K562 (cell line): ENCODE measurements at regions of chr1 and their contacts with region 1.

Region 1: GRCh38 chr1:167491586-167492461 is 26.5 kb downstream of the CD247 start:
- DNase-seq: peak in 2 of 4 experiments; percentile 52 to 62
- ATAC-seq: peak; percentile 85
- H3K4me3 ChIP-seq: no peak overlapping the region
- H3K27ac ChIP-seq: no peak overlapping the region
- H3K4me1 ChIP-seq: peaks cover 0 to 5% of the 10 kb centered on the region in 2 experiments; a peak in 3 of 5 replicates
- H3K27me3 ChIP-seq: peaks cover 30 to 37% of the 10 kb centered on the region in 2 experiments
- CTCF ChIP-seq: peak in 1 of 3 experiments; percentile 27; a peak in 2 of 6 replicates
- EP300 ChIP-seq: no peak
- POLR2A ChIP-seq: no peak
- RAD21 ChIP-seq: no peak

Region 2: DNA sequence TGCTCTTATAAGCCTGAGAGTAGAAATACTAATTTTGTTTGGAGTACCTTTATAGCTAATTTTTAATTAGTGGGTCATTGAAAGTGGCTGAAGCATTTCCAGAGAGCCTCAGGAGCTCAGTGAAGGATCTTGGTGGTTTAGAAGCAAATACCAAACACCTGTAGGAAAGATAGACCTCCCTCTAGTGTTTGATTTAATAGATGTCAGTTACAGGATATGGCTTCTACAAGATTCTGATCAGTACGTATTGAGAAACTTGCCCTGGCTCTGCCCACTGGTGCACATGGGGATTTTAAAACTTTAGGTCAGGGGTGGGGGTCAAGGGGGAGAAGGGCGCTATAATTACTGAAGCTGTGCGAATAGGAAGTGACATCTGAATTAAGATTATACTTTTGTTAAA is 149.0 kb before region 1 on chr1:
- CTCF ChIA-PET with region 1: no interaction called
- POLR2A ChIA-PET with region 1: no interaction called
- in situ Hi-C with region 1: no loop called
- intact Hi-C with region 1: no loop called
- DNase-seq: no peak
- ATAC-seq: peak; percentile 66
- H3K4me3 ChIP-seq: no peak overlapping the region
- H3K27ac ChIP-seq: no peak overlapping the region
- H3K4me1 ChIP-seq: no peaks in the 10 kb centered on the region
- H3K27me3 ChIP-seq: no peaks in the 10 kb centered on the region
- CTCF ChIP-seq: peak in 2 of 3 experiments; percentile 21 to 31; a peak in 2 of 6 replicates
- EP300 ChIP-seq: no peak
- POLR2A ChIP-seq: no peak
- RAD21 ChIP-seq: 0 out of 4 replicates have a peak, but pooled peaks of 1 of the 2 experiments have one; percentile 17

Region 3: GRCh38 chr1:167477986-167478385 is 13.8 kb before region 1 on chr1:
- CTCF ChIA-PET with region 1: no interaction called
- POLR2A ChIA-PET with region 1: interaction called, 3 read pairs
- in situ Hi-C with region 1: no loop called
- intact Hi-C with region 1: loop called (anchors 1 kb)
- DNase-seq: no peak
- ATAC-seq: no peak
- H3K4me3 ChIP-seq: no peak overlapping the region
- H3K27ac ChIP-seq: no peak overlapping the region
- H3K4me1 ChIP-seq: peaks cover 0 to 7% of the 10 kb centered on the region in 2 experiments; a peak in 1 of 5 replicates
- H3K27me3 ChIP-seq: peaks cover 9 to 46% of the 10 kb centered on the region in 2 experiments
- CTCF ChIP-seq: no peak
- EP300 ChIP-seq: no peak
- POLR2A ChIP-seq: no peak
- RAD21 ChIP-seq: no peak

Region 4: DNA sequence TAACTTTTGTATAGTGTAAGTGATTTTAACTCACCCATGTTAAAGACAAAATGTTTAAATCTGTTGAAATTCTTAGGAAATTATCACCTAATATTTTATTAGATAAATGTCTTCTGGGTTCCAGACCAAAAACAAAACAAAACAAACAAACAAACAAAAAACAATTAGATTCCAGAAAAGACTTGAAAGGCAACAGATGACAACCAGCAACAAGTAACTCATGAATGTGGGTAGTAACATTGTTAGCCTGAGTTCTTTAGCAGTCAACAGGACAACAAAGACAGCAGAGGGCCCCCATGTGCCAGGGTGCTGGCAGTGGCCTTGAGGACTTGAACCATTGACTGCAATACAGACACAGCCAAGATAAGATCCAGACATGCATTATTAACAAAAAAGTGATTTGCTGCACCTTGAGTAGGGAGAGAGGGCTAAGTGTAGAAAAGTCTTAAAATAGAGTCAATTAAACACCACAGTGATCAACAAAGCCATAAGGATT is 28.9 kb after region 1 on chr1:
- CTCF ChIA-PET with region 1: no interaction called
- POLR2A ChIA-PET with region 1: interaction called, 3 read pairs
- in situ Hi-C with region 1: no loop called
- intact Hi-C with region 1: loop called (anchors 2 kb)
- DNase-seq: peak in 1 of 4 experiments; percentile 33
- ATAC-seq: no peak
- H3K4me3 ChIP-seq: no peak overlapping the region
- H3K27ac ChIP-seq: no peak overlapping the region
- H3K4me1 ChIP-seq: peaks cover 9 to 12% of the 10 kb centered on the region in 2 experiments; a peak in 4 of 5 replicates
- H3K27me3 ChIP-seq: no peaks in the 10 kb centered on the region
- CTCF ChIP-seq: peak; percentile 32 to 46 (median 38); a peak in 3 of 6 replicates
- EP300 ChIP-seq: no peak
- POLR2A ChIP-seq: no peak
- RAD21 ChIP-seq: peak; percentile 17 to 69; a peak in 3 of 4 replicates